ENCODE measurements at regions of chr5 and their contacts with region 1.

Region 1: GRCh38 chr5:38023799-38024198 is 184.0 kb upstream of the GDNF start:
- DNase-seq: peak; percentile 12
- ATAC-seq: no peak
- H3K4me3 ChIP-seq: no peak overlapping the region
- H3K27ac ChIP-seq: no peak overlapping the region
- H3K4me1 ChIP-seq: peaks cover 35% of the 10 kb centered on the region
- H3K27me3 ChIP-seq: peaks cover 2 to 20% of the 10 kb centered on the region in 2 experiments; a peak in 3 of 5 replicates
- CTCF ChIP-seq: peak; percentile 14; the same call in 1 of the 2 replicates
- EP300 ChIP-seq: no peak
- POLR2A ChIP-seq: no peak
- RAD21 ChIP-seq: no peak

Region 2: GRCh38 chr5:37966291-37966690 is 57.5 kb before region 1 on chr5:
- CTCF ChIA-PET with region 1: no interaction called
- POLR2A ChIA-PET with region 1: no interaction called
- in situ Hi-C with region 1: no loop called
- intact Hi-C with region 1: no loop called
- DNase-seq: no peak
- ATAC-seq: no peak
- H3K4me3 ChIP-seq: no peak overlapping the region
- H3K27ac ChIP-seq: no peak overlapping the region
- H3K4me1 ChIP-seq: no peaks in the 10 kb centered on the region
- H3K27me3 ChIP-seq: peaks cover 0 to 19% of the 10 kb centered on the region in 2 experiments; a peak in 1 of 5 replicates
- CTCF ChIP-seq: no peak
- EP300 ChIP-seq: no peak
- POLR2A ChIP-seq: no peak
- RAD21 ChIP-seq: no peak

Region 3: DNA sequence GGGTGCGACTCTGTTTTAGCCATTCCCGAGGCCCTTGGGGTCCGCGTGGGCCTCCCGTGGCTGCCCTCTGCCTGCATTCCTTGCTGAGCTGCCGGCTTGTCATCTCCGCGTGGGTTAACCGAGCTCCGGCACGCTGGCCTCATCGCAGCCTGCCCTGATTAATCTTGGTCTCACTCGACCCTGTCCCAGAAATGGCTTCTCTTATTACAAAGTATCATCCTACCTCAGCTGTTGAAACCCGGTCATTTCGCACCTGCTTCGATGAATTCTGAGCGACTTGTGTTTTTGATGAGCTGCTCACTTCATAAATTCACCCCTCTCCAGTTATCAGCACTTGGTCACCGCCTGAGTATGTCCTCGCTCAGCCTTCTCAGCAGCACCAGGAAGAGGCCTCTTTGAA is 111.0 kb after region 1 on chr5:
- CTCF ChIA-PET with region 1: no interaction called
- POLR2A ChIA-PET with region 1: no interaction called
- in situ Hi-C with region 1: no loop called
- intact Hi-C with region 1: no loop called
- DNase-seq: no peak
- ATAC-seq: no peak
- H3K4me3 ChIP-seq: no peak overlapping the region
- H3K27ac ChIP-seq: no peak overlapping the region
- H3K4me1 ChIP-seq: peaks cover 27% of the 10 kb centered on the region
- H3K27me3 ChIP-seq: no peaks in the 10 kb centered on the region
- CTCF ChIP-seq: no peak
- EP300 ChIP-seq: no peak
- POLR2A ChIP-seq: no peak
- RAD21 ChIP-seq: no peak

Region 4: GRCh38 chr5:38167562-38167996 is 143.8 kb after region 1 on chr5:
- CTCF ChIA-PET with region 1: no interaction called
- POLR2A ChIA-PET with region 1: no interaction called
- in situ Hi-C with region 1: no loop called
- intact Hi-C with region 1: loop called (anchors 10 kb)
- DNase-seq: no peak
- ATAC-seq: no peak
- H3K4me3 ChIP-seq: no peak overlapping the region
- H3K27ac ChIP-seq: no peak overlapping the region
- H3K4me1 ChIP-seq: peaks cover 33% of the 10 kb centered on the region
- H3K27me3 ChIP-seq: no peaks in the 10 kb centered on the region
- CTCF ChIP-seq: no peak
- EP300 ChIP-seq: no peak
- POLR2A ChIP-seq: no peak
- RAD21 ChIP-seq: no peak

Measured in HepG2 (cell line).